ENCODE measurements at regions of chr2 and their contacts with region 1.

Region 1: GRCh38 chr2:72862239-72862988 is 24.8 kb upstream of the SPR start:
- DNase-seq: peak; percentile 93
- ATAC-seq: peak; percentile 99

Region 2: DNA sequence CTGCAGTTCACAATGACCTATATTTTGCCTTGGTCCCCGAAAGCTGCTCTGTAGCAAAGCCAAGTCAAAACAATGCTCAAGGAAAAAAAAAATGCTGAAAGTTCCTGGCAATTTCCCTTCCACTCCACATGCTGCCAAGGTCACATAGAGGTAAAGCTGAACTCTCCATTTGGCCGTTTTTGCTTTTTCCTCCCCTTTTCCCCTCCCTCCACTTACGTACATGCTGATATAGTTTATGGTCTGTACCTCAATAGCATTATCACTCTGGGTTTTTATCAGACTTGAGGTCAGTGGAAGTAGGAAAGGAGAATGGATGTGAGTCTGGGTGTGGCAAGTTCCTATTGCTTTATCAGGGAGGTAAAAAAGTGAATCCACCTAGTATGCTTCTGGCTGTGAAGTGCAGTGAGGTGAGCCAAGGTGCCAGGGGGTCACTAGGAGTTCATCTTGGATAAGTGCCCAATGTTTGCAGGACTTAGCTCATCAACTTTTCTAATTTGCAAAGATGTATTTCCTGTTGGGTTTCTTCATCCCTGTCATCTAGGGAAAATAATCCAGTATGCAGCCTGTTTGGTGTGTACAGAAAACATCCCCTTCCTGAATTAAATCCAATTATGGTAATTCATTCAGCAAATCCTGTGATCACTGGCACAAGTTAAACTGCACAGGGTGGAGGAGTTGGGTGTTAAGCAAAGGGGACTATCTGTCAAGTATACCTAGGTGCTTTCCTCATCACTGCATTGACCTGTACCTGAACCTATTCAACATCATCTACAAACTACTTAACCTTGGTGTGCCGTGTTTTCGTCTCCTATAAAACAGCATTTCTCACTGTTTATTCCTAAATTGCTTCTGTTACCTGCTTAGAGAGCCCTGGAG is 590.4 kb before region 1 on chr2:
- intact Hi-C with region 1: loop called (anchors 10 kb)
- DNase-seq: no peak
- ATAC-seq: peak; percentile 37

Region 3: DNA sequence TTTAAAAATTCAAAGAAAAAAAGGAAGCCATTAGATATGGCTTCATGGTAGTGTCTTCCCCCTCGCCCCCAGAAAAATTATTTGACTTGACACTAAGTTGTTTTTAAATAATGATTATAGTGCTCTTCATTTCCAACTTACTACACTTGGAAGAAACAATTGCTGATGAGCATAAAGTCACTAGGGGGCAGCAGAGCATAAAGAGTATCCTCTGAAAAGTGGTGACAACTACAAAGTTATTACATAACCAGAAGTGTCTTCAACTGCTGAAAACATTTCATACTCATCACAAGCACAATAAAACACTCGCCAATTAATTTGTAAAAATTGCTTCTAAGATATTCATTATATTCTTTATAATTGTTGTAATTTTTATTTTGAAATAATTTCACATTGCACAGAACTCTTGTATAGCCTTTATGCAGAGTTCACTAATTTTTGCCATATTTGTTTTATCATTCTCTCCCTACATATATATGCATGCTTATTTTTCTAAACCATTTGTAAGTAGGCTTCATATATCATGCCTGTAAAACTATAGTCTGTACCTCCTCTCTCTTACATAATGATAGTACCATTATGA is 91.4 kb before region 1 on chr2:
- intact Hi-C with region 1: loop called (anchors 2 kb)
- DNase-seq: no peak
- ATAC-seq: peak; percentile 78

Region 4: DNA sequence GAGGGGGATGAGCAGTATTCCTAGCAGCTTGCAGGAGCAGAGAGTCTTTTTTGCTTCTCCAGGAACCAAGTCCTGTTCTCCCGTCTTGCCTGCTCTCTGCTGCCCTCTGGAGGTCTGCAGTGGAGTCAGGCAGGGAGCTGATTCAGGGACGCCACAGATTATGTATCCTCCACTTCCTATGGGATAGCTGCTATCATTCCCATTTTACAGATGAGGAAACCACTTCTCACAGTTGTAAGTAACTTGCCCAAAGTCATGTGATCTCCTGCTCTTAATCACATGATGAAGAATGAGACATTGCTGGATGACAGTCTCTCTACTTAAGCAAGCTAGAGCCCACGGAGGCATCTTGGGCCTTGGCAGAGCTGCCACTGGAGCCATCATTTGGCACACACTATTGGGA is 1472.5 kb after region 1 on chr2:
- intact Hi-C with region 1: no loop called
- DNase-seq: peak; percentile 82
- ATAC-seq: peak; percentile 88

Measured in Right ventricle myocardium superior (tissue), 1 donor.